ENCODE measurements at regions of chr7 and their contacts with region 1.

Region 1: GRCh38 chr7:55438757-55439525 is 73.8 kb downstream of the LANCL2 start:
- DNase-seq: no peak
- H3K4me3 ChIP-seq: no peak overlapping the region
- H3K27ac ChIP-seq: no peak overlapping the region
- H3K4me1 ChIP-seq: no peaks in the 10 kb centered on the region
- H3K27me3 ChIP-seq: no peaks in the 10 kb centered on the region
- CTCF ChIP-seq: no peak
- POLR2A ChIP-seq: no peak

Region 2: DNA sequence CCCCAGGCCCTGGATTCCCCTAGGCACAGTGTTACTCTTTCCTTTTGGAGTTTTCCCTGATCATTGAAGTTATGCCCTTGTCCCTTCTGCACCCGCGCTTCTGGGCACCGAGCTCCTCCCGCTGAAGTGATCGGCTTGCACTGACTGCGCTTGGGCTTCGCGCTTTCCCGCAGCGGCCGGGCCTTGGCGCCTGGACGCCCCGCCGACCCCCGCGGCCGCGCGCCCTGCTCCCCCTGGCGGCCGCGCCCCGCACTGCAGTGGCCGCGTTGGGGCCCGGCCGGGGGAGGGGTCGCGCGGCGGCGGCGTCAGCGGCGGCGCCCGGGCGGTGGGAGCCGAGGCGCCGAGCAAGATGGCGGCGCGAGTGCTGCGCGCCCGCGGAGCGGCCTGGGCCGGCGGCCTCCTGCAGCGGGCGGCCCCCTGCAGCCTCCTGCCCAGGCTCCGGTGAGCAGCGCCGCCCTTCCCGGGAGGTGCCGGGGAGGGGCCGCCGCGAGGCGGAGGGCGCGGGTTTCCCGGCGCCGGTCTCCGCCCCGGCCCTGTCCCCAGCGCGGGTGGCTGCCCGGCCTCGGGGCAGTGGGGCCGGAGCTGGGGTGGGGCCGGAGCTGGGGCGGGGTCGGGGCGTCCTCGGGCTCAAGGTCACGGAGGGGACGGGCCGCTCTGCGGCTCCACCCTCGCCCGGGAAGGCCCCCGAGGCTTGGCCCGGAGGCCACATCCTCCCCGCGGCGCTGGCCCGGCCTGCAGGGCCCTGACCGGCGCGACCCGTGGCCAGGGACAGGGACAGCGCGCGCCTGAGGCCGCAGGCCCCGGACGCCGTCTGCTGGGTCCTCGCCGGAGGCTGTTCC is 525.5 kb after region 1 on chr7 and contains the start of gene NIPSNAP2:
- intact Hi-C with region 1: loop called (anchors 5 kb)
- DNase-seq: peak; percentile 44 to 64
- H3K4me3 ChIP-seq: peak within 1 kb of the TSS; percentile 61 to 95 (median 64)
- H3K27ac ChIP-seq: peak within 1 kb of the TSS; percentile 94 to 96
- H3K4me1 ChIP-seq: peaks cover 0 to 5% of the 10 kb centered on the region in 2 donors
- H3K27me3 ChIP-seq: no peaks in the 10 kb centered on the region
- CTCF ChIP-seq: peak in 1 of 3 donors; percentile 96
- POLR2A ChIP-seq: no peak
- total RNA-seq, gene NIPSNAP2: 79.8 to 128 (median 87.2) TPM

Measured in breast epithelium (tissue), 4 donors.